ENCODE measurements at regions of chr11 and their contacts with region 1.

Region 1: GRCh38 chr11:121700968-121701367 is 248.2 kb upstream of the SORL1-AS1 start:
- H3K4me3 ChIP-seq: no peak overlapping the region
- H3K27ac ChIP-seq: no peak overlapping the region
- H3K4me1 ChIP-seq: no peaks in the 10 kb centered on the region
- CTCF ChIP-seq: no peak

Region 2: GRCh38 chr11:121525376-121525775 is 175.6 kb before region 1 on chr11:
- CTCF ChIA-PET with region 1: interaction called, 11 read pairs
- POLR2A ChIA-PET with region 1: no interaction called
- H3K4me3 ChIP-seq: no peak overlapping the region
- H3K27ac ChIP-seq: no peak overlapping the region
- H3K4me1 ChIP-seq: no peaks in the 10 kb centered on the region
- CTCF ChIP-seq: no peak

Region 3: DNA sequence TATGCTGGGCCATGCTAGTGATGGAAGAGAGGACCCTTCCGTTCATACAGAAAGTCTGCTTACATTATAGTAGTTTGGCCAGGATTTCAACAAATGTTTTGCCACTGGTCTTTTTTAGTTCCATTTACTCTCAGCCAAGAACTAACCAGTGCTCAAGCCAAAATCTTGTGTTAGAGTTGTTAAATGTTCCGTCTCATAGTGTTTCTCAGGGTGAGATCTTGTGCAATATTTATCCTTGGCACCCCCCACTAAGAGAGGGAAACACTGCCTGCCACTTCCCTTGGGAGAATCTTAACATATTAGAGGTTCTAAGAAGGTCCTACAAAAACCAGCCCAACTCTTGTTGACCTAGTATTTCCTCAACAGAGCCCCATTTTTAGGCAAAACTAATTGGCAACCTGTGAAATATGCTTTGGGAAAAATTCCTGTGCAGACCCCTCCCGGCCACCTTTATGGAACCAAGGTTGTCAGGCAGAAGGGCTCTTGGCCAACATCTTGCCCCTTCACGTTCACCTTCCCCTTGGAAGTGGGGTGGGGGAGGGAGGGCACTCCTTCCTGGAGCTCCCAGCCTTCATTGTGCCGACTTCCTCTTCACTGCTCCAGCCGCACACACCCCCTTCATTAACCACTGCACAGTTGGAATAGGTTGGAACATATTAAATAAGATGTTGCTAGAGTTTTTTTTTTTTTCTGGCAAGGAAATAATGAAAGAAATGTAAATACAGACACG is 75.0 kb before region 1 on chr11:
- CTCF ChIA-PET with region 1: no interaction called
- POLR2A ChIA-PET with region 1: no interaction called
- H3K4me3 ChIP-seq: no peak overlapping the region
- H3K27ac ChIP-seq: no peak overlapping the region
- H3K4me1 ChIP-seq: no peaks in the 10 kb centered on the region
- CTCF ChIP-seq: no peak

Region 4: DNA sequence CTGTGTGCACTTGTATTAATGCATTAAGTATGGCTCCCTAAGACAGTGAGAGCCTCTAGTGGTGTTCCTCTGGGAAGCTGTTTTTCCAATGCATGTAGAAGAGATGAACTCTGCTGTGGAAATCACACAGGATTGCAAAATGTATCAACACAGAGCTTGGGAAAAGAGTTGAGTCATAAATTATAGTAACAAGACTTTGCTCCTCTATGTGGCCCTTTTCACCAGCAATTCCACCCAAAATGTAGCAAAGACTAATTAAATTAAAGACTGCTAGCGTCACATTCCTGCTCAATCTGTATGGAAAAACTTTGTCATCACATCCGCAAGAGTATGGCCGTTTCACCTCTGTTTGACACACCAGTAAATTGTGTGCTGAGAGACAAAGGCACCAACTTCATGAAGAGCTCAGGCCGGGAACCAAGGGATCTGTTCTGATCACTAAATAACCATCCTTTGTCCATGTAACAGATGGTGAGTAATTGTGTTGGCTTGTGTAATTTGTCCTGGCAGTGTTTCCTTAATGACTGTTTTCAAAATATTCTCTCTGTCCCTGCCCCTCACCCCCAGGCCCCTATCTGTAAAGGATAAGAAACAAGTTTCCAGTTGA is 39.0 kb before region 1 on chr11:
- CTCF ChIA-PET with region 1: no interaction called
- POLR2A ChIA-PET with region 1: no interaction called
- H3K4me3 ChIP-seq: no peak overlapping the region
- H3K27ac ChIP-seq: no peak overlapping the region
- H3K4me1 ChIP-seq: no peaks in the 10 kb centered on the region
- CTCF ChIP-seq: no peak